Adrenal gland (tissue), 19 donors: ENCODE measurements at regions of chr2 and their contacts with region 1.

Region 1: GRCh38 chr2:78676921-78677696 is 348.4 kb upstream of the REG3G start:
- DNase-seq: no peak
- H3K4me3 ChIP-seq: no peak overlapping the region
- H3K27ac ChIP-seq: no peak overlapping the region
- H3K4me1 ChIP-seq: no peaks in the 10 kb centered on the region
- H3K27me3 ChIP-seq: no peaks in the 10 kb centered on the region
- CTCF ChIP-seq: no peak
- POLR2A ChIP-seq: no peak

Region 2: GRCh38 chr2:78861546-78861945 is 184.4 kb after region 1 on chr2:
- intact Hi-C with region 1: loop called in 1 of 2 experiments (anchors 10 kb)
- DNase-seq: peak in 3 of 7 donors; percentile 7 to 19 (median 17)
- H3K4me3 ChIP-seq: no peak overlapping the region
- H3K27ac ChIP-seq: no peak overlapping the region
- H3K4me1 ChIP-seq: no peaks in the 10 kb centered on the region
- H3K27me3 ChIP-seq: no peaks in the 10 kb centered on the region
- CTCF ChIP-seq: peak; percentile 15 to 50 (median 38)
- POLR2A ChIP-seq: no peak

Region 3: GRCh38 chr2:78979380-78980151 is 302.5 kb after region 1 on chr2:
- intact Hi-C with region 1: loop called in 1 of 2 experiments (anchors 10 kb)
- DNase-seq: peak; percentile 42 to 75 (median 64)
- H3K4me3 ChIP-seq: no peak overlapping the region
- H3K27ac ChIP-seq: no peak overlapping the region
- H3K4me1 ChIP-seq: no peaks in the 10 kb centered on the region
- H3K27me3 ChIP-seq: no peaks in the 10 kb centered on the region
- CTCF ChIP-seq: peak; percentile 47 to 76 (median 66)
- POLR2A ChIP-seq: no peak